ENCODE measurements at regions of chr7 and their contacts with region 1.

Region 1: GRCh38 chr7:93890464-93891068 is at the start of gene TFPI2:
- DNase-seq: peak; percentile 43 to 74
- H3K4me3 ChIP-seq: peak within 1 kb of the TSS; percentile 66 to 84 (median 74)
- H3K27ac ChIP-seq: no peak within 1 kb of the TSS
- H3K4me1 ChIP-seq: no peaks in the 10 kb centered on the region
- H3K27me3 ChIP-seq: peaks cover 0 to 25% (median 6%) of the 10 kb centered on the region in 4 experiments; a peak in 5 of 7 replicates
- CTCF ChIP-seq: no peak
- EP300 ChIP-seq: no peak
- POLR2A ChIP-seq: no peak
- RAD21 ChIP-seq: peak; percentile 13 to 15; a peak in 2 of 4 replicates
- total RNA-seq, gene TFPI2: 8.9 and 10.9 TPM in 2 replicates

Region 2: GRCh38 chr7:93651603-93652159 is 238.9 kb before region 1 on chr7:
- CTCF ChIA-PET with region 1: no interaction called
- POLR2A ChIA-PET with region 1: no interaction called
- DNase-seq: no peak
- H3K4me3 ChIP-seq: no peak overlapping the region
- H3K27ac ChIP-seq: no peak overlapping the region
- H3K4me1 ChIP-seq: peaks cover 0 to 5% (median 0%) of the 10 kb centered on the region in 4 experiments; a peak in 1 of 7 replicates
- H3K27me3 ChIP-seq: no peaks in the 10 kb centered on the region
- CTCF ChIP-seq: no peak
- EP300 ChIP-seq: no peak
- POLR2A ChIP-seq: no peak; a peak in 1 of 3 replicates
- RAD21 ChIP-seq: no peak

Region 3: GRCh38 chr7:93902777-93903423 is 12.3 kb after region 1 on chr7:
- CTCF ChIA-PET with region 1: interaction called, 47 read pairs
- POLR2A ChIA-PET with region 1: interaction called, 4 read pairs
- DNase-seq: peak in 1 of 2 experiments; percentile 54
- H3K4me3 ChIP-seq: no peak overlapping the region
- H3K27ac ChIP-seq: no peak overlapping the region
- H3K4me1 ChIP-seq: peaks cover 0 to 2% (median 0%) of the 10 kb centered on the region in 4 experiments; a peak in 1 of 7 replicates
- H3K27me3 ChIP-seq: no peaks in the 10 kb centered on the region
- CTCF ChIP-seq: peak in 2 of 3 experiments; percentile 68 to 71; a peak in 3 of 4 replicates
- EP300 ChIP-seq: no peak
- POLR2A ChIP-seq: no peak
- RAD21 ChIP-seq: peak; percentile 78 to 87